ENCODE measurements at regions of chr6 and their contacts with region 1.

Region 1: GRCh38 chr6:44221291-44221960 is 2.0 kb upstream of the SLC29A1 start:
- DNase-seq: peak; percentile 88
- H3K4me3 Mint-ChIP-seq: no peak overlapping the region
- H3K27ac Mint-ChIP-seq: no peak overlapping the region
- H3K4me1 Mint-ChIP-seq: peaks cover 34% of the 10 kb centered on the region
- H3K27me3 Mint-ChIP-seq: peaks cover 9% of the 10 kb centered on the region

Region 2: DNA sequence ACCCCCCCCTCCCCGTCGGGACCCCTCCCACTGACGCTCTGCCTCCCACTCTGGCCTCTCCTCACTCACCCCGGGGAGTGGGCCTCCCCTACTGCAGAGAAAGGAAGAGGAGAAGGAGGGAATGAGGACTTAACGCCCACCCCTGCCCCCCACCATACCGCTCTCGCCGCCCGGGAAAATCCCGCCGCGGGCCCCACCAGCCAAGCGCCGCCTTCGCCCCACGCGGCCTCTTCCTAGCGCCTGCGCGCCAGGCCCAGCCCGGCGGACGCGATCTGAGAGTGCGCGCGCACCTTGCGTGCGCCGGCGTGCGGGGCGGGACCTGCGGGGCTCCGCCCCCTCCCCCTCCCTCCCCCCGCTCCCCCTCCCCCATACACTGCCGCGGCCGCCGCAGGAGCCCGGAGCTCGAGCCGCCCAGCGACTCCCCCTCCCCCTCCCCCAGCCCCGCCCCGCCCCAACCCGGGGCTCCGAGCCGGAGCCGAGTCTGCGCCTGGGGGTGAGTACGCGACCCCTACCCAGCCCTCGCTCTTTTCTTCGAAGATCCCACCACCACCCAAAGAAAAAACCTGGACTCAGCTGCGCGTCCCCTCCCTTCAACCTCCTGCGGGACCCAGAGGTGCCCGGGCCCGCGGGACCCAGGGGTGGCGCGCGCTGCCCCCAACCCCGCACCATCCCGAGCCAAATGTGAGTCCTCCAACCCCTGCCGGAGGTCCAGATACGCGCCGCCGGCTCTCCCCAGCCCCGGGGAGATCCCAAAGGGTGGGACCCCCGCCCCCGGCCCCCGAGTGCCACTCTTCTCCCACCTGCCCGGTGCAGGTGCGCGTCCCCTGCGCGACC is 94.0 kb before region 1 on chr6 and contains the starts of genes MRPL14 and TMEM63B:
- CTCF ChIA-PET with region 1: no interaction called
- POLR2A ChIA-PET with region 1: no interaction called
- intact Hi-C with region 1: loop called (anchors 5 kb)
- DNase-seq: peak; percentile 93
- H3K4me3 Mint-ChIP-seq: peak within 1 kb of the TSS; percentile 92
- H3K27ac Mint-ChIP-seq: peak within 1 kb of the TSS; percentile 97
- H3K4me1 Mint-ChIP-seq: peaks cover 46% of the 10 kb centered on the region
- H3K27me3 Mint-ChIP-seq: no peaks in the 10 kb centered on the region
- total RNA-seq, gene MRPL14: 49.5 to 50.1 TPM
- total RNA-seq, gene TMEM63B: 11.6 to 13.0 TPM

Region 3: GRCh38 chr6:44237813-44238433 is 16.5 kb after region 1 on chr6:
- CTCF ChIA-PET with region 1: interaction called, 31 read pairs
- POLR2A ChIA-PET with region 1: interaction called, 14 read pairs
- intact Hi-C with region 1: loop called (anchors 1 kb)
- DNase-seq: peak; percentile 87
- H3K4me3 Mint-ChIP-seq: peak overlapping the region; percentile 83
- H3K27ac Mint-ChIP-seq: peak overlapping the region; percentile 95
- H3K4me1 Mint-ChIP-seq: peaks cover 29% of the 10 kb centered on the region
- H3K27me3 Mint-ChIP-seq: no peaks in the 10 kb centered on the region

Region 4: DNA sequence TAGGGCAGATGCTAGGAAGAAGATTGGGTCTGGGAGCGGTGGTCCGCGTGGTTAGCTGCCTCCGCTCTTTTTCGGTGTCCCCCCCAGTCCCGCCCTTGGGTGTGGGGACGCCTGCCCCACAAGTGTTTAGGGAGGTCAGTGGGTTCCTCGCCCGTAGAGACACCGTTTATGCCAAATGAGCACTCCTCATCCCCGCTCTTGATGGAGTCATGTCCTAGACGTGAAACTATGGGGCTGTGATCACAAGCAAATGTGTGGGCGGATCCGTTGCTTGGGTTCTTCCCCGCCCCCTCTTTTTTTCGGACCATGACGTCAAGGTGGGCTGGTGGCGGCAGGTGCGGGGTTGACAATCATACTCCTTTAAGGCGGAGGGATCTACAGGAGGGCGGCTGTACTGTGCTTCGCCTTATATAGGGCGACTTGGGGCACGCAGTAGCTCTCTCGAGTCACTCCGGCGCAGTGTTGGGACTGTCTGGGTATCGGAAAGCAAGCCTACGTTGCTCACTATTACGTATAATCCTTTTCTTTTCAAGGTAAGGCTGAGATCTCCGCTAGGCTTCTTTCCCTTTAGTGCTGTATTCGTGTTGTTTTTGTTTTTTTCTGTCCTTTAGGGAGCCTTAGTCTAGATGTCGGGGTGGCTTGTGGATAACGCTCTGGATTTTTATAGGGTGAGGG is 25.4 kb after region 1 on chr6 and contains the start of gene HSP90AB1:
- CTCF ChIA-PET with region 1: interaction called, 12 read pairs
- POLR2A ChIA-PET with region 1: interaction called, 93 read pairs
- intact Hi-C with region 1: loop called (anchors 1 kb)
- DNase-seq: peak; percentile 99
- H3K4me3 Mint-ChIP-seq: peak within 1 kb of the TSS; percentile 96
- H3K27ac Mint-ChIP-seq: peak within 1 kb of the TSS; percentile 99
- H3K4me1 Mint-ChIP-seq: peaks cover 45% of the 10 kb centered on the region
- H3K27me3 Mint-ChIP-seq: peaks cover 4% of the 10 kb centered on the region
- total RNA-seq, gene HSP90AB1: 1,671 to 1,695 TPM

Region 5: GRCh38 chr6:44257025-44257752 is 35.8 kb after region 1 on chr6 and contains the start of gene SLC35B2:
- CTCF ChIA-PET with region 1: interaction called, 29 read pairs
- POLR2A ChIA-PET with region 1: interaction called, 6 read pairs
- intact Hi-C with region 1: loop called (anchors 1 kb)
- DNase-seq: peak; percentile 76
- H3K4me3 Mint-ChIP-seq: peak within 1 kb of the TSS; percentile 77
- H3K27ac Mint-ChIP-seq: peak within 1 kb of the TSS; percentile 83
- H3K4me1 Mint-ChIP-seq: peaks cover 56% of the 10 kb centered on the region
- H3K27me3 Mint-ChIP-seq: no peaks in the 10 kb centered on the region
- total RNA-seq, gene SLC35B2: 16.5 to 16.8 TPM

Region 6: GRCh38 chr6:44312901-44313788 is 91.7 kb after region 1 on chr6 and contains the start of gene AARS2:
- CTCF ChIA-PET with region 1: interaction called, 14 read pairs
- POLR2A ChIA-PET with region 1: no interaction called
- intact Hi-C with region 1: no loop called
- DNase-seq: peak; percentile 95
- H3K4me3 Mint-ChIP-seq: peak within 1 kb of the TSS; percentile 98
- H3K27ac Mint-ChIP-seq: peak within 1 kb of the TSS; percentile 89
- H3K4me1 Mint-ChIP-seq: peaks cover 20% of the 10 kb centered on the region
- H3K27me3 Mint-ChIP-seq: peaks cover 2% of the 10 kb centered on the region
- total RNA-seq, gene AARS2: 16.3 to 16.5 TPM

Region 7: DNA sequence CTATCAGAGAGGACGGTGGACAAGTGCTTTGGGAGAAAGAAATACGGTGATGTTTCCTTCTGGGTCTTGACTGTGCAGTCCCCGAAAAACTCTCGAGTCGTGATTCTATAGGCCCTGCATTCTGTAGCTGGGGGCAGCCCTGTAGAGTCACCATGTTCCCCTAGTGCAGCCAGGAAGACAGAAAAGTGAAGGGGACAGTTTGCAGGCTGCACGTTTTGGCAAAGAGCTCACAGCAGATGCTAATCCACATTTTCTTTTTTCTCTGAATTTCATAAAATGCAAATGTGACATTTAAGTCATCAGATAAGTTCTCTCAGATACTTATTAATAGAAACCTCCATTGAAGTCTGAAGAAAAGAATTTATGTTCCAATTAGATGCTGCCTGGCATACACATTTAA is 140.5 kb after region 1 on chr6:
- CTCF ChIA-PET with region 1: no interaction called
- POLR2A ChIA-PET with region 1: no interaction called
- intact Hi-C with region 1: no loop called
- DNase-seq: no peak
- H3K4me3 Mint-ChIP-seq: no peak overlapping the region
- H3K27ac Mint-ChIP-seq: no peak overlapping the region
- H3K4me1 Mint-ChIP-seq: no peaks in the 10 kb centered on the region
- H3K27me3 Mint-ChIP-seq: peaks cover 10% of the 10 kb centered on the region

Measured in activated CD4-positive, alpha-beta memory T cell treated with anti-CD3 and anti-CD28 coated beads for 36 hours (primary cell).